ENCODE measurements at regions of chr15 and their contacts with region 1.

Region 1: DNA sequence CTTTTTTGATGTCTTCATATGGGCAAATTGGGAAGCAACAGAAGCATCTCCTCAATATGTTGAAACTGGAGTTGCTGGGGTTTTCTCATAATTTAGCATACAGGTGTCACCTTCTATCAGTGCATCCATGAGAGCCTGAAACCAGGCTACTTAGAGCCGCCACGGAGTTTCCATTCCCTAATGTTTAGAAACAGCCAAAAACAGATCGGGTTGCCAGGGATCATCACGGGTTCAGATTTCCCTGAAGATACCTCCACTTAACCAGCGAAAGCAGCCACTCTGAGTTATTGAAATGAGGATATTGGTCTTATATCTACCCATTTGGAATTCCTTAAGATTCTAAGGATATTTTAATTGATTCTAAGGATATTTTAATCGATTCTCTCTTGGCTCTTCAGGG is 14.5 kb downstream of the TERB2 start:
- DNase-seq: no peak
- ATAC-seq: no peak

Region 2: DNA sequence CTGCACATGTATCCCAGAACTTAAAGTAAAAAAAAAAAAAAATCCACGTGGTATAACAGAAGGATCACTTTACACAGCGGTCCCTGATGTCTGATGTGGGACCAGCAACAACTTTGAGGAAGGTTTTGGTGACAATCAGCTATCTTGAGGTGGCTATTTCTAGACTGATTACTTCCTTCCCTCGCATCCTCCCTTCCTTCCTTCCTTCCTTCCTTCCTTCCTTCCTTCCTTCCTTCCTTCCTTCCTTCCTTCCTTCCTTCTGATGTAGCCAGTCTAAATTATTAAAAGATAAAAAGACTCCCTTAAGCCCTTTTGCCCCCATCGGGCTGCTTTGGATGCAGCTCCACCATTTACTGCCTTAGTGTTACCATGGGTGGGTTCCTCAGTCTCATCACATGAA is 66.9 kb after region 1 on chr15:
- intact Hi-C with region 1: loop called (anchors 5 kb)
- DNase-seq: no peak
- ATAC-seq: no peak

Region 3: DNA sequence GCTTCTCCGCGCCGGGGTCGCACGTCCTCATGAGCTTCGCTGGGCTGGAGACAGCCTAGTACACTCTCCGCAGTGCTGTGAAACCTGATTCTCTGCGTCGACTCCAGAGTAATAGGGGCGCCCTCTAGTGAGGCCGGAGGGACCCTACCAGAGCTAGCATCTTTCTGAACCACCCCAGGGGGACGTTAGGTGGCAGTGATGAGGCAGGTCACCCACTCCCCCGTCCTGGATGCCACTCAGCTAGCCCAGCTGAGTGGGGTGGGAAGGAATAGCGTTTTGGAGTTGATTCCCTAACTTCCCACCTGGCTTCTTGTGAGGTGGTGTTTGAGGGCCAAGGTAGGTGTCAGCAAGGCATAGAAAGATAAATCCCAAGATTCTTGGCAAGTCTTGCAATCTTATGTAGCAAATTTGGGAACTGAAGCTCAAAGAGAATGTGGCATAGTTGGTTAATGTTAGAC is 147.1 kb after region 1 on chr15:
- intact Hi-C with region 1: loop called (anchors 10 kb)
- DNase-seq: peak; percentile 87
- ATAC-seq: peak; percentile 99

Measured in Right ventricle myocardium inferior (tissue), 1 donor.